Activated naive CD4-positive, alpha-beta T cell treated with anti-CD3 and anti-CD28 coated beads for 36 hours (primary cell): ENCODE measurements at regions of chr14 and their contacts with region 1.

Region 1: DNA sequence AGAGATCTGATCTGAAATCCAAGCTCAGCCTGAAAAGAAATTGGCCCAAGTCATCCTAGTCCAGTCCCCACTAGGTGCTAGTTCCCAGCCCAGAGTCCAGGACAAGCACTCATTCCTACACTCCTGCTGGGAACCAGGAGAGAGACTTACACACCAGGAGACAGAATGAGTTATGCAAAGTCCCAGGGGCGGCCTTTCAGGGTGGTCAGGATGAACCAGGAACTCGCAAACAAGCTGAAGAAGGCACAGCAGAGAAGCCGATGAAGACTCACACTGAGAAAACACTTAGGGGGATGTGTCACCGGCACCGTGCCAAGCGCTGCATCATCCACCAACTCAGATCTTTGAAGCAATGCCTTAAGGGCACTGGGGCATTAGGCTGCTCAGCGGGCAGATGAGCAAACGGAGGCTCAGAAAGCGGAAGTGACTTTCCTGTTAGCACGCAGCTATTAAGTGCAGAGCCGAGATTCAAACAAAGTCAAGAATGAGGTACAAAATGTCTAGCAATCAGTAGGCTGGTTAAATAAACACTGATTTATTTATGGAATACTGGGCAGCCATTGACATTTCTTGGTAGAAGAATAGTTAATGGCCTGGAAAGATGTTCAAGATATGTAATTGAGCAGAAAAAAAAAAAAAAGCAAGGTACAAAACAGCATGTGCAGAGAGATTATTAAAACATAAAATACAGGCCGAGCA is 78.7 kb downstream of the LRRC74A start:
- DNase-seq: peak; percentile 95
- H3K4me3 Mint-ChIP-seq: no peak overlapping the region
- H3K27ac Mint-ChIP-seq: no peak overlapping the region
- H3K4me1 Mint-ChIP-seq: peaks cover 30% of the 10 kb centered on the region
- H3K27me3 Mint-ChIP-seq: no peaks in the 10 kb centered on the region

Region 2: GRCh38 chr14:76929927-76930326 is 25.0 kb after region 1 on chr14:
- CTCF ChIA-PET with region 1: interaction called, 3 read pairs
- intact Hi-C with region 1: loop called (anchors 1 kb)
- DNase-seq: peak; percentile 85
- H3K4me3 Mint-ChIP-seq: peak overlapping the region; percentile 58
- H3K27ac Mint-ChIP-seq: peak overlapping the region; percentile 72
- H3K4me1 Mint-ChIP-seq: peaks cover 70% of the 10 kb centered on the region
- H3K27me3 Mint-ChIP-seq: no peaks in the 10 kb centered on the region